ENCODE measurements at regions of chr16 and their contacts with region 1.

Region 1: GRCh38 chr16:58755989-58756649 is 22.0 kb upstream of the GOT2 start:
- DNase-seq: peak; percentile 74
- ATAC-seq: peak; percentile 98
- H3K4me3 ChIP-seq: no peak overlapping the region
- H3K27ac ChIP-seq: no peak overlapping the region
- H3K4me1 ChIP-seq: no peaks in the 10 kb centered on the region
- H3K27me3 ChIP-seq: no peaks in the 10 kb centered on the region; the same call in 1 of the 2 replicates
- CTCF ChIP-seq: peak; percentile 71

Region 2: DNA sequence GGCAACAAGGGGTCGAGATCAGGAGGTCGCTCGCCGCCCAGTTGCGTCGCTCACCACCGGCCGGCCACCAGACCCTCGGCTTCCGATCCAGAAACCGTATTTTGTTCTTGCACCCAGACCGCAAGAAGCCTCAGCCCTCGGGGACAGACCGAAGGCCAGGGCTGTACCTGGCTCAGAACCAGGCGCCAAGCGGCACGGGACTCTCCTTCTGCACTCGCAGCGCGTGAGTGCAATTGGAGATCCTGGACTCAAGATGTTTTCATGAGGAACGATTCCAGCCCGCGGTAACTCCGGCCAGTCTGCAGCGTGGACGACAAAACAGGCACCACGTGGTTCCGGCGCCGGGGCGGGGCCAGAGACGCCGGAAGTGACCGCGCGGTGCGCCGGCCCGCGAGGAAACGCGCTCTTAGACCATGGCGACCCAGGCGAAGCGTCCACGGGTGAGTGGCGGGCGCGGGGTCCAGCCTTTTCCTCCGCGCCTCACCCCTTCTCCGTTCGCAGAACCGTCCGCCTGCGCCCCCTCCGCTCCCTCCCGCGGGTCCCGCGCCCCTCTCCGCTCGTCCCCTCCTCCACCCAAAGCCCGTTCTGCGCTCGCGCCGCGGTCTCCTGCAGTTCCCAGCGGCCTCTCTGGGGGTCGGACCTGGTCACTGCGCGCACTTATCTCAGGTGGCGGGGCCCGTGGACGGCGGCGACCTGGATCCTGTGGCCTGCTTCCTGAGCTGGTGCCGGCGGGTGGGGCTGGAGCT is 240.8 kb before region 1 on chr16 and contains the start of gene SETD6:
- CTCF ChIA-PET with region 1: no interaction called
- POLR2A ChIA-PET with region 1: no interaction called
- intact Hi-C with region 1: loop called (anchors 2 kb)
- DNase-seq: peak; percentile 80
- ATAC-seq: peak; percentile 85
- H3K4me3 ChIP-seq: peak within 1 kb of the TSS; percentile 74
- H3K27ac ChIP-seq: peak within 1 kb of the TSS; percentile 36
- H3K4me1 ChIP-seq: peaks cover 8% of the 10 kb centered on the region
- H3K27me3 ChIP-seq: no peaks in the 10 kb centered on the region
- CTCF ChIP-seq: no peak
- total RNA-seq, gene SETD6: 22.0 and 22.5 TPM in 2 replicates

Region 3: DNA sequence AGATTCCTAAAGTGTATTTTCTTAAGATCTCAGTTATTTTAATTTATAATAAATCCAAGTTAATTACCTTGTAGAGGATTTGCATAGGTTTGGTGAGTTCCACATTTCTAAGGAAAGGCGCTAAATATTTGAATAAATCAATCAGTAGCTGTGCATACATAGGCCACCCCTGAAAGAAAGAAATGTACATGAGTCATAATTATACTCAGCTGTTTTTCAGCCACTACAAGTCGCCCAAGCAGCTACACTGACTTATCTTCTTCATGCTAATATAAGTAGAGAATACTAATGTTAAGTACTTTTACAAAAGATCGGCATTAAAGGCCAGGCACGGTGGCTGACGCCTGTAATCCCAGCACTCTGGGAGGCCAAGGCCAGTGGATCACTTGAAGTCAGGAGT is 225.9 kb before region 1 on chr16:
- CTCF ChIA-PET with region 1: no interaction called
- POLR2A ChIA-PET with region 1: no interaction called
- intact Hi-C with region 1: no loop called
- DNase-seq: no peak
- ATAC-seq: no peak
- H3K4me3 ChIP-seq: no peak overlapping the region
- H3K27ac ChIP-seq: no peak overlapping the region
- H3K4me1 ChIP-seq: no peaks in the 10 kb centered on the region
- H3K27me3 ChIP-seq: no peaks in the 10 kb centered on the region
- CTCF ChIP-seq: no peak

Region 4: DNA sequence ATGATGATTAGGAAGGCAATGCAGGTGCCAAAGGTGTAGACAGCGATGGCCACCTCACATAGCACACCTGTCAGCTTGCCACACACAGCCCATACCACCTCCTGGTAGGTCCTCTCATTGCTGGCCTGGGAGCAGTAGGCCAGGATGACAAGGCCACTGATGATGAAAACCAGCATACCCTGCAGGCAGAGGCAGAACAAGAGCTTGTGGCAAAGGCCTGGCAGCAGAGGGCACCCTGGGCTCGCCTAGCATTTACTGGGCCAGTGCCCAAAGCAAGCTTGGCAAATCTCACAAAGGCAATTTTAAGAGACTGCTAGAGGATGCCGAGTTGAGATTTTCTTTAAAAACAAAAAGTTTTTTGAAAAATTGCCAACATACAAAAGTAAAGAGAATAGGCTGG is 77.4 kb before region 1 on chr16:
- CTCF ChIA-PET with region 1: interaction called, 17 read pairs
- POLR2A ChIA-PET with region 1: no interaction called
- intact Hi-C with region 1: loop called (anchors 1 kb)
- DNase-seq: peak; percentile 44
- ATAC-seq: peak; percentile 78
- H3K4me3 ChIP-seq: no peak overlapping the region
- H3K27ac ChIP-seq: no peak overlapping the region
- H3K4me1 ChIP-seq: peaks cover 3% of the 10 kb centered on the region; the same call in 1 of the 2 replicates
- H3K27me3 ChIP-seq: no peaks in the 10 kb centered on the region
- CTCF ChIP-seq: peak; percentile 51

Region 5: DNA sequence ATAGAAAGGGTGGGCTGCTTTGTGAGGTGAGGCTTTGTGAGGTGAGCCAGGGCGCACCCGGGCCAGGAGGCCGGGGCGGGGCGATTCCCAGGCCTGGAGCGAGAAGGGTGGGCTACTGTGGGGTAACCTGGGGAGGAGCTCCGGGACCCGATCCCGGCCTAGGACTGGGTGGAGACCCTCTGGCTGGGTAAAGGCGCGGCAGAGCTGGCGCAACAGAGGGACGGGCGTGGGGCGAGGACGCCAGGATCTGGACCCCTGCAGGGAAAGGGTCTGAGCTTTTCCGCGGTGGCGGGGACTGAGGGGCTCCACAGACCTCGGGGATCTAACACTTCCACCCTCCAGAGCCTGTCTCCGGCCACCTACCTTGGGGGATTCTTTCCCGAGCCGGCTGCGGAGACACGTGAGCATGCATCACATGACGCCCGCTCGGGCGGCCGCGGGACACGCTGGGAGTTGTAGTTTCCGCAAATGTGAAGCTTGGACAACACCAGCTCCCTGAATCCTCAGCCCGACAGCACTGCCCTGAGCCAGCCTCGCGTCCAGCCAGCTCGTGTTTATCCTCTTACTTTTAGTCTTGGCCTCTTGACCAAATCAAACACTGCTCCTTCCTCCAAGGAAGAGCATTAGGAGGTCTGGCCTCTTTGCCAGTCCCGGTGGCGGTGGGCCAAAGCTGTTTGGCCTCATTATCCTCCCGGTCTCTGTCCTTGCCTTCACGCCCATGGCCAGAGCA is 71.6 kb before region 1 on chr16 and contains the start of gene SLC38A7:
- CTCF ChIA-PET with region 1: interaction called, 11 read pairs
- POLR2A ChIA-PET with region 1: no interaction called
- intact Hi-C with region 1: no loop called
- DNase-seq: peak; percentile 73
- ATAC-seq: peak; percentile 99
- H3K4me3 ChIP-seq: peak within 1 kb of the TSS; percentile 78
- H3K27ac ChIP-seq: 0 out of 2 replicates have a peak within 1 kb of the TSS, but pooled peaks have one; percentile 2
- H3K4me1 ChIP-seq: peaks cover 14% of the 10 kb centered on the region
- H3K27me3 ChIP-seq: no peaks in the 10 kb centered on the region
- CTCF ChIP-seq: no peak
- total RNA-seq, gene SLC38A7: 4.0 and 7.3 TPM in 2 replicates

Region 6: DNA sequence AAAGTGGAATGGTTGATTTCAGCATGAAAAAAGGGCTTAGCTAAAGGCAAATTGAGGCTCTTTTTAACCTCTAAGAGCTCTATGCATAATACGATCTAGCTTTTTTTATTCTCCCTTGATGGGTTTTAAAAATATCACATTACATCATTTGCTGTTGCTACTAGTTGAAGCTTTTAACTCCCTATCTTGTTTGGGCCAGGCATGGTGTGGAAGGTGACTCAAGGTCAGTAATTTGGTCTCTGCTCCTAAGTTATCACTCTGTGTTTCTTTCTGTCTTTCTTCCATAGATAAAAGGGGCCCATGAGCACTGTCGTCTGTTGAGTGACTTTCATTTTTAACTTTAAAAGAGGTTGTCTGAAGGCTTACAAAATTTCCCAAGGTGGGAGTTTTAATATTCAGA is 36.1 kb after region 1 on chr16:
- CTCF ChIA-PET with region 1: no interaction called
- POLR2A ChIA-PET with region 1: no interaction called
- intact Hi-C with region 1: no loop called
- DNase-seq: no peak
- ATAC-seq: no peak
- H3K4me3 ChIP-seq: no peak overlapping the region
- H3K27ac ChIP-seq: no peak overlapping the region
- H3K4me1 ChIP-seq: no peaks in the 10 kb centered on the region
- H3K27me3 ChIP-seq: peaks cover 27% of the 10 kb centered on the region
- CTCF ChIP-seq: no peak

Region 7: GRCh38 chr16:58866935-58867334 is 110.8 kb after region 1 on chr16:
- CTCF ChIA-PET with region 1: no interaction called
- POLR2A ChIA-PET with region 1: no interaction called
- intact Hi-C with region 1: no loop called
- DNase-seq: no peak
- ATAC-seq: no peak
- H3K4me3 ChIP-seq: no peak overlapping the region
- H3K27ac ChIP-seq: no peak overlapping the region
- H3K4me1 ChIP-seq: no peaks in the 10 kb centered on the region
- H3K27me3 ChIP-seq: peaks cover 28% of the 10 kb centered on the region
- CTCF ChIP-seq: no peak

Measured in PC-3 (cell line).